Dendritic cell treated with granulocyte-macrophage colony-stimulating factor and Interleukin-4, amounts not matched to agents 40 ng/mL and 50 ng/mL, for 4 days (primary cell): ENCODE measurements at regions of chr13 and their contacts with region 1.

Region 1: DNA sequence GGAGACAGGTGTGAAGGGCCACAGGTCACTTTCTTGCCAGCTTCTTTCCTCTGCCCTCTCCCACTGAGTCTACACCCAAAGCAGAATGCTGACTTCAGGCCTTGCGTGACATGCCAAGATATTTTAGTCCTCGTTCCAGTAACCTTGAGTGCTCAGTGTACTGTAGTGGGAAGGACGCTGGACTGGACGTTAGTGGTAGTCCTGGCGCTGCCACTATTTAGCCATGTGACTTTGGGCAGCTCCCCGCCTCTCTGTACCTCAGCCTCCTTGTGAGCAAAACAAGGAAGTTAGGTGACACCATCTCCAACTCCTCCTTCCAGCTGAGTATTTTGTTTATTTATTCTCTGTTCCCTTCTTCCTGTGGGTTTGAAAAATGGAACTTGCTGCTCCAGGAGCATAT is 86.1 kb downstream of the FRY start:
- H3K4me3 Mint-ChIP-seq: no peak overlapping the region
- H3K27ac Mint-ChIP-seq: peak overlapping the region; percentile 79
- H3K4me1 Mint-ChIP-seq: peaks cover 49% of the 10 kb centered on the region
- H3K27me3 Mint-ChIP-seq: no peaks in the 10 kb centered on the region

Region 2: DNA sequence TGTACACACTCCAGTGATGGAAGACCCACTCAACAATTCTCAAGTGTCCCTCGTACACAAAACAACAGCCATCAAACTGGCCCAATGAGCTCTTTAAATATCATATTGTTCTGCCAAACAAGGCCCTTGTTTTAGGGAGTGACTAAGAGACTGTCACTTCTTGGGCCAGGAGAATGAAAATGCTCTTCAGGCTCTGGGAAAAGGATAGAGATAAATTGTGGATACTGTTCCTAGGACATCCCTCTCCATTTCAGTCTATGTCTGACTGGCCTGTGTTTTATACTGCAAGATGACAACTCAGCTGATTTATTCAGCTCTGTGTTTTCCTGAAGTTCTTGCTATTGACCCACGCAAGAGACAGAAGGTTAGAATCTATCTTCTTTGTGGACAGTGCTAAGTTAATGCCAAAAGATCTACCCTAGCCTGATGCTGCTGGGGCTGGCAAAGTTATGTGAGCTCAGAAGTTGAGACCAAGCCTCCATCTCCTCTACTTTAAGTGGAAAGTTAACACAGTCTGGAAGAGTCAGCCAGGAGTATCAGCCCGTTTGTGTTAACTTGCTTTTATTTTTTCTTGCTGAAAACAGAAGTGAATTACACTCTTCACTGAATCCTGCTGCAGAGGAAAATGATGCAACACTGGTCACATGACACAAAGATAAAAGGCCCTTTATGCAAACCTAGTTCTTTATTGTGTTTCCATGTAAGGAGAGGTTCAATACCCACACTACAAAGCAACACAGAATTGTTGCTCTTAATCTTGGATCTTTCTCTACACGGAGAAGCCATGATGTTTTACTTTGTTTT is 71.5 kb before region 1 on chr13:
- intact Hi-C with region 1: loop called (anchors 5 kb)
- H3K4me3 Mint-ChIP-seq: peak overlapping the region; percentile 26
- H3K27ac Mint-ChIP-seq: peak overlapping the region; percentile 80
- H3K4me1 Mint-ChIP-seq: peaks cover 70% of the 10 kb centered on the region
- H3K27me3 Mint-ChIP-seq: no peaks in the 10 kb centered on the region

Region 3: DNA sequence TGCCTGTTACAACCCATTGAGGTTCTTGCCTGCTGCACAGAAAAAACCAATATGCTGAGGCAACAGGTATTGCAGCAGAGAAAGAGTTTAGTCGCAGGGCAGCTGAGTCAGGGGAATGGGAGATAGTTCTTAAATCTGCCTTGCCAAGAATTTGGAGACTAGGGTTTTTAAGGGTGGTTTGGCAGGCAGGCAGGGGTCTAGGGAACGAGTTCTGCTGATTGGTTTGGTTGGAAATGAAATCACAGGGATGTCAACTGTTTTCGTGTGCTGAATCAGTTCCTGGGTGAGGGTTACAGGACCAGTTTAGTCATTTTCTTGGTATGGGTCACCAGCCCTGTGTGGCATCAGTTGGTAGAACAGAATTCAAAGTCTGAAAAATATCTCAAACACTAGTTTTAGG is 505.1 kb after region 1 on chr13:
- intact Hi-C with region 1: no loop called
- H3K4me3 Mint-ChIP-seq: no peak overlapping the region
- H3K27ac Mint-ChIP-seq: no peak overlapping the region
- H3K4me1 Mint-ChIP-seq: peaks cover 27% of the 10 kb centered on the region
- H3K27me3 Mint-ChIP-seq: no peaks in the 10 kb centered on the region